ENCODE measurements at regions of chr19 and their contacts with region 1.

Region 1: DNA sequence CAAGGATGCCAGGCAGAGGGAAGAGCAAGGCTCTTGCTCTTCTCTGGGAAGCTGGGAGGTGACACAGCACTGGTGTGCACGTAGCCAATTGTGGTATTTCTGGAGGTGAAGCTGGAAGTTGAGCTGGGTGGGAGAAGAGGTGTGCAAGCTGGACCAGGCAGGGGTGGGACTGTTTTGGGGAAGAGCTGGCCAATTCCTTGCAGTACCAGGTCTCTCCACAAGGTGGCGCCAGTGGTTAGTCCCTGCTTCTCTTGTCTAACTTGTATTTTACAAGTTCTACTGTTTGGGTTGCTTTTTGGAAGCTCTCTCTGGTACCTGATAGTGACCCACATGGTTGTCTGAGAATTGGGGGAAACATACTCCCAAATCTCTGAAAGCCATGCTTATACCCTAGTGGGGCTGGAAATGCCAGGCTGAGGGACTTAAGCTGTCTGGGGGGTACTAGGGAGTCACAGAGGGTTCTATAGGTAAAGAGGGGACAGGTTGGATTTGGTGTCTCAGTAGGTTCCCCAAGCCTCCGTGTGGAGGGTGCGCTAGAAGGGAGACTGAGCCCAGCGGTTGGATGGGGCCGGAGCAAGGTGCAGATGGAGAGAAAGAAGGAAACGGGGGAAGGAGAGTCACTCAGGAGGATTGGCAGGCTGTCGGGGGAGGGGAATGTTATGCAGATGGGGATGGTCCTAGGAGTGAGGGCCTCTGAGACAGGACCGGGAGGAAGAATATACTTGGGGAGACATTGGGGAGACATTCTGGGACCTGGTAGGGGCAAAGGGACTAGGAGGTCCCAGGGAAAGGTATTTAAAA is 3.0 kb downstream of the HPN start:
- DNase-seq: peak; percentile 65 to 76 (median 71)
- H3K4me3 ChIP-seq: no peak overlapping the region
- H3K27ac ChIP-seq: no peak overlapping the region
- H3K4me1 ChIP-seq: peaks cover 0 to 74% (median 70%) of the 10 kb centered on the region in 4 experiments
- H3K27me3 ChIP-seq: no peaks in the 10 kb centered on the region

Region 2: DNA sequence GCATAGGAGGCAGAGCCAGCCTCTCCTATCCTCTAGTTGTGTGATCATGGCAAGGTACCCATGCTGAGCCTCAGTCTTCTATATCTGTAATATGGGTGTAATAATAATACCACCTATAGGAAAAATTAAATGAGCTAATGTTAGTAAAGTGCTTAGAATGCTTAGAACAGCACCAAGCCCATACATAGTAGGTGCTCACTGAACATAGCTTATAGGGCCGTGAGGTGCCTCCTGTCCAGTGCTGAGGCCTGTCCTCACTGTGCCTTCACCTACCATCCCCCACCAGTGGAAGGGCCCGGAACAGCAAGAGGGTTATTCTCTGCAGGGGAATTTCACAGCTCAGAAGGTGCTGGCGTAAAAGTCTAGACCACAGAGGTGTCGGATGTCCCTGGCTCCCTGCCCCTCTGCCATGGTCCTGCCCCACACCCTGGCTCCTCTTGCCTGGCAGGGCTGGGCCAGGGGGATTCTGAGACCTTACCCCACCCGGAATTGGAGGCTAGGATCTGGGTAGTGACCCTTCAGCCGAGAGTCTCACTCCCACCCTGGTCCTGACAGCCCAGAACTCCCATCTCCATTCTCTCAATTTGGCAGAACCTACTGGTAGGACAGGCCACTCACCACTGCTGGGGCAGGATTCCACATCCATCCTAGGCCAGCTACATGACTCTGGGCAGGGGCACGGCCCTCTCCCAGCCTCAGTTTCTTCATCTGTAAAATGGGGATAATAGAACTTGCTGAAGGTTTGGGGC is 16.5 kb before region 1 on chr19:
- CTCF ChIA-PET with region 1: interaction called, 13 read pairs
- POLR2A ChIA-PET with region 1: no interaction called
- DNase-seq: no peak
- H3K4me3 ChIP-seq: no peak overlapping the region
- H3K27ac ChIP-seq: no peak overlapping the region
- H3K4me1 ChIP-seq: peaks cover 0 to 9% (median 7%) of the 10 kb centered on the region in 4 experiments
- H3K27me3 ChIP-seq: peaks cover 0 to 35% (median 10%) of the 10 kb centered on the region in 5 experiments

Region 3: DNA sequence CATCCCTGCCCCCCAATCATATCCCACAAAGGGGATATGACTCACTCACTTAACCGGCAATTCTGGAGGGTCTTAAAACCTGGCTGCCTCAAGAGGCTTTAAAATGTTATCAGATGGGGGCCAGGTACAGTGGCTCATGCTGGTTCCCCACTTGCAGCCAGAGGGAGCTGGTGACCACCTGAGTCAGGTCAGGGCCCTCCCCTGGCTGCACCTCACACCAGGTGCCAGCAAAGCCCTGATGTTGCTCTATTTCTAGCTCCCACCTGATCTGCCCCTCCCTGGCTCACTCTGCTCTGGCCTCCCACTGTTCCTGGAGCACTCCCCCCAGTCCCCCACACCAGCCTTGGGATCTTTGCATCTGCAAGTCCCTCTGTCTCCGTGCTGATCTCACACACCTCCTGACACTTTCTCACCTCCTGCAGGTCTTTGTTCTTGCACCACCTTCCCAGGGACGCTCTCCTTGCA is 11.2 kb after region 1 on chr19:
- CTCF ChIA-PET with region 1: interaction called, 44 read pairs
- POLR2A ChIA-PET with region 1: interaction called, 5 read pairs
- DNase-seq: peak in 2 of 3 donors; percentile 51 to 55
- H3K4me3 ChIP-seq: no peak overlapping the region
- H3K27ac ChIP-seq: no peak overlapping the region
- H3K4me1 ChIP-seq: peaks cover 0 to 5% (median 2%) of the 10 kb centered on the region in 4 experiments
- H3K27me3 ChIP-seq: no peaks in the 10 kb centered on the region

Region 4: DNA sequence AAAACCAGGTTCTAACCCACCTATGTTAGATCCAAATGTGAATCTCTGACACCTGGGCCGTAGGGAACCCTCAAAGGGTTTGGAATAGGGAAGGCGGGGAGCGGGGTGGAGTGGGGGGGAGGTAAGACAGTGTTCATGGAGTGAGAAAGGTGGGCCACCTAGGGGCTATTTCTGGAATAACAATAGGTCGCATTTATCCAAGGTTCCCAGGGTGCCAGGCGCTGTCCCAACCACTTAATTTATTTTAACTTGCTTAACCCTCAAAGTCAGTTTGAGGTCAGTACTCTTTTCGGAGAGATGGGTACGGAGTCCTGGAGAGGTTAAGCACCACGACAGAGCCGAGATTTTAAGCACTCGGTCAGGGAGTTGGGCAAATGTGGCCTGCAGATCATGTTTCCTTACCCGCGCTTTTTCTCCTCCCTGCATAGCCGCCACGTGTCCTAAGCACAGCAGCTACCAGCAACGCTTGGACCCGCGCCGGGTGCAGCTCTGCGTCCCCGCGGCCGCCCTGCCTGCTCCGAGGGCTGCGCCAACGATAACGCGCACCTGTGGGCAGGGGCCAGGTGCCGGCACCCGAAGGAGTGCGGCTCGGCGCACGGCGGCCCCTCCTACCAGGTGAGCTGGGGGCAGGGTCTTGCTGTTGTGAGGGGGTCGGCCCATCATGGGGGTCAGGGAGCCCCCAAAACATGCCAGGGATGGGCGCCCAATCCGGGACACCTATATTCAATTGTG is 46.2 kb after region 1 on chr19:
- CTCF ChIA-PET with region 1: interaction called, 11 read pairs
- POLR2A ChIA-PET with region 1: no interaction called
- DNase-seq: peak; percentile 62 to 73 (median 68)
- H3K4me3 ChIP-seq: peak overlapping the region in 1 of 7 experiments; percentile 17
- H3K27ac ChIP-seq: no peak overlapping the region
- H3K4me1 ChIP-seq: peaks cover 0 to 11% (median 8%) of the 10 kb centered on the region in 4 experiments
- H3K27me3 ChIP-seq: peaks cover 0 to 2% (median 0%) of the 10 kb centered on the region in 5 experiments

Measured in common myeloid progenitor, CD34-positive (primary cell).